ENCODE measurements at regions of chr1 and their contacts with region 1.

Region 1: DNA sequence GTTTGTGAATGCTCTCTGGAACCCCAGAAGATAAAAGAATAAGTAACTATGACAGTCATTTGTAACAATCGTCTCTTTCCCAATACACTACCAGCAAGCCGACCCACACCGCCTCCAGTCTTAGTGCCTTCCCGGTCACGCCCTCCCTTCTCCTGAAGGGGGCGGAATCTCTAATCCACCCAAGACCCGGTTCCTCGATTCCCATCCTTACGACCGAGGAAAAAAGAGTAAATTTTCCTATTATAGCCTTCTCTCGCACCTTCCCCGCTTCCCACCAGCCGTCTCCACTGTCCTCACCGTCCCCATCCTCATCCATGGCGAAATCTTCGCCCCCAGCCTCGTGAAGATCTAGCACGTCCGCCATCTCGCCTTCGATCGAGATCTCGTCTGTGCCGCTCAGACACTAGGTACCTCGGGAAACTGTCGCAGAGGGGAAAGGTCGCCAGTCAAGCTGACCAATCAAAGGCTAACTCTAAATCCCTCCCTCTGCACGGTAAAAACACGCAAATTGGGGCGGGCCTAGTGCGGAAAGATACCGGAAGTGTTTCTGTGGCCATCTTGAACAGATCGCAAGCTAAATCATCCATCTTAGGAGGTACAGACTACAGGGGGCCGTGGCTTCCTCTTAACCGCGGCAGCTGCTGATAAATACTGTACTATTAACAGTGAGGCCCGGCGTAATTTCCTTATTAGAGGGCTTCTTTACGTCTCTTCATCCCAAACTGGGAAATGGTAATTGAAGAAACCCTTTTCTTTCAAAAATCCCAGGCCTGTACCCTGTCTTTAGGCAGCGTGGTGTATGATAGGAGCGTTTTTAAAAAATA is at the start of gene RBM8A:
- DNase-seq: peak; percentile 97
- ATAC-seq: peak; percentile 99 to 100
- H3K4me3 ChIP-seq: peak within 1 kb of the TSS; percentile 86 to 94 (median 91)
- H3K27ac ChIP-seq: peak within 1 kb of the TSS; percentile 92 to 98 (median 94)
- H3K4me1 ChIP-seq: peaks cover 13 to 16% of the 10 kb centered on the region in 2 donors
- H3K27me3 ChIP-seq: no peaks in the 10 kb centered on the region
- CTCF ChIP-seq: peak; percentile 60 to 77 (median 73)
- POLR2A ChIP-seq: peak; percentile 99
- total RNA-seq, gene RBM8A: 199 to 589 (median 381) TPM

Region 2: GRCh38 chr1:145858894-145859490 is 68.3 kb before region 1 on chr1 and contains the start of gene PIAS3:
- in situ Hi-C with region 1: no loop called
- intact Hi-C with region 1: loop called (anchors 2 kb)
- DNase-seq: peak; percentile 95
- ATAC-seq: peak; percentile 82 to 83
- H3K4me3 ChIP-seq: peak within 1 kb of the TSS; percentile 74 to 96 (median 82)
- H3K27ac ChIP-seq: peak within 1 kb of the TSS; percentile 90 to 96 (median 92)
- H3K4me1 ChIP-seq: peaks cover 19 to 21% of the 10 kb centered on the region in 2 donors
- H3K27me3 ChIP-seq: no peaks in the 10 kb centered on the region
- CTCF ChIP-seq: no peak
- POLR2A ChIP-seq: peak; percentile 85 to 89
- total RNA-seq, gene PIAS3: 26.2 to 40.0 (median 35.7) TPM

Region 3: GRCh38 chr1:145957443-145958319 is 30.4 kb after region 1 on chr1 and contains the start of gene LIX1L:
- in situ Hi-C with region 1: no loop called
- intact Hi-C with region 1: loop called (anchors 1 kb)
- DNase-seq: peak; percentile 97 to 98
- ATAC-seq: peak; percentile 74 to 81
- H3K4me3 ChIP-seq: peak within 1 kb of the TSS; percentile 62 to 88 (median 70)
- H3K27ac ChIP-seq: peak within 1 kb of the TSS; percentile 88 to 99 (median 96)
- H3K4me1 ChIP-seq: peaks cover 58 to 72% of the 10 kb centered on the region in 2 donors
- H3K27me3 ChIP-seq: no peaks in the 10 kb centered on the region
- CTCF ChIP-seq: no peak
- POLR2A ChIP-seq: peak; percentile 91 to 93
- total RNA-seq, gene LIX1L: 37.1 to 108 (median 75.4) TPM

Region 4: GRCh38 chr1:145996433-145997015 is 69.2 kb after region 1 on chr1 and contains the start of gene TXNIP:
- in situ Hi-C with region 1: no loop called
- intact Hi-C with region 1: no loop called
- DNase-seq: peak; percentile 99 to 100
- ATAC-seq: peak; percentile 61 to 74
- H3K4me3 ChIP-seq: peak within 1 kb of the TSS; percentile 63 to 98 (median 81)
- H3K27ac ChIP-seq: peak within 1 kb of the TSS; percentile 95 to 99 (median 98)
- H3K4me1 ChIP-seq: peaks cover 8 to 25% of the 10 kb centered on the region in 2 donors
- H3K27me3 ChIP-seq: no peaks in the 10 kb centered on the region
- CTCF ChIP-seq: no peak
- POLR2A ChIP-seq: peak; percentile 94 to 96
- total RNA-seq, gene TXNIP: 1,815 to 2,839 (median 2,202) TPM